Heart left ventricle (tissue), 16 donors: ENCODE measurements at regions of chr12 and their contacts with region 1.

Region 1: GRCh38 chr12:22409377-22410164 is 75.1 kb upstream of the ST8SIA1 start:
- DNase-seq: no peak
- ATAC-seq: peak in 1 of 4 donors; percentile 37
- H3K4me3 ChIP-seq: peak overlapping the region in 1 of 12 donors; percentile 43
- H3K27ac ChIP-seq: peak overlapping the region in 2 of 12 donors; percentile 19 to 73
- H3K4me1 ChIP-seq: peaks cover 0 to 6% (median 0%) of the 10 kb centered on the region in 12 donors
- H3K27me3 ChIP-seq: no peaks in the 10 kb centered on the region
- CTCF ChIP-seq: no peak
- POLR2A ChIP-seq: no peak

Region 2: DNA sequence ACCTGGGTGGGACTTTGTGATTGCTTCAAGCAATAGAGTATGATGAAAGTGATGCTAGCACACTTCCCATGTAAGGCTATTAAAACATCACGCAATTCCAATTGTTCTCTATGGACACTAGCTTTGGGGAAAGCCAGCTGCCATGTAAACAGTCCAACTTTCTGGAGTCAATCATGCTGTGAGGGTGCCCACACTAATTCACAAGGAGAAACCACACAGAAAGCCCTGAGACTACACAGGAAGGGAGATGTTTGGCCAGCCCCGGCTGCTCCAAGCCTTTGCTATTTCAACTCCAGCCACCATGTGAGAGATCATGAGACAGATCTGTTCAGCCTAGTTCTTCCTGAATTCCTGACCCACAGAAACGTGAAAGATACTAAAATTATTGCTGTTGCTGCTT is 171.4 kb before region 1 on chr12:
- intact Hi-C with region 1: loop called in 1 of 10 experiments (anchors 5 kb)
- DNase-seq: no peak
- ATAC-seq: no peak
- H3K4me3 ChIP-seq: no peak overlapping the region
- H3K27ac ChIP-seq: no peak overlapping the region
- H3K4me1 ChIP-seq: peaks cover 0 to 6% (median 0%) of the 10 kb centered on the region in 12 donors
- H3K27me3 ChIP-seq: no peaks in the 10 kb centered on the region
- CTCF ChIP-seq: no peak
- POLR2A ChIP-seq: no peak

Region 3: GRCh38 chr12:22527999-22528398 is 118.4 kb after region 1 on chr12:
- intact Hi-C with region 1: no loop called
- DNase-seq: no peak
- ATAC-seq: no peak
- H3K4me3 ChIP-seq: no peak overlapping the region
- H3K27ac ChIP-seq: no peak overlapping the region
- H3K4me1 ChIP-seq: peaks cover 0 to 10% (median 0%) of the 10 kb centered on the region in 12 donors
- H3K27me3 ChIP-seq: no peaks in the 10 kb centered on the region
- CTCF ChIP-seq: no peak
- POLR2A ChIP-seq: no peak